ENCODE measurements at regions of chr2 and their contacts with region 1.

Region 1: DNA sequence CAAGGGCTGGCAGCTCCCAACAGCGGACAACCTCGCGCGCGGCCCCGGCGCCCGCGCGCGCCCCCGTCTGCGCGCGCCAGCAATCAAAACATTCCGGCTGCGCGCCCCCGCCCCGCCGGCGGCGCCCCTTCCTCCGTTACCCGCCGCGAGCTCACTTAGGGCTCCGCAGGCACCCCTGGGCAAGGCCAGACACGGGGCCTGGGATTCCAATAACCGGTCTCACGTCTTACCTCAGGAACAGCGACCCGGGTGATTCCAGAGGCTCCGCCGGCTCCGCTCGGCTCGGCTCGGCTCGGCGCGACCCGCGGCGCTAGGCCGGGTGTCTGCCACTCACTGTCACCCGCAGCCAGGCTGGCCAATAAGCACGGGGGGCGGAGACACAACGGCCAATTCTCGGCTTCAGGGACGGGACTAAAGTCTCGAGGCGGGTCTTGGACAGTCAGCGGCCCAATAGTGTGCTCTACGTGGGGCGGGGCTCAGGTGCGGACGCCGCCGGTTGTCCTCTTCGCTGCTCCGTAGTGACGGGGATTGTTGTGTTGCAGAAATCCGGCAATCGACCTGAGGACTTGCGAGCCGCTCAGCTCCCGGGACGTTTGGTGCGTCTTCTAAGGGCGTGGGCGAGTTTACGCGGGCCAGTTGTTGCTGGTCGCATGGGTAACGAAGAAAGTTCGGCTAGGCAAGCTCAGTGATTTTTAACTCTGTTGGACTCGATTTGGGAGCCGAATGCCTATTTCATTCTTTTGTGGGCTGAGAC is at the starts of genes ANKZF1 and ATG9A:
- DNase-seq: peak; percentile 99
- H3K4me3 ChIP-seq: peak within 1 kb of the TSS; percentile 87
- H3K27ac ChIP-seq: peak within 1 kb of the TSS; percentile 76
- H3K4me1 ChIP-seq: peaks cover 16% of the 10 kb centered on the region
- CTCF ChIP-seq: no peak
- total RNA-seq, gene ANKZF1: 57.8 and 91.0 TPM in 2 replicates
- total RNA-seq, gene ATG9A: 22.2 and 27.7 TPM in 2 replicates

Region 2: GRCh38 chr2:219206442-219207253 is 22.8 kb before region 1 on chr2 and contains the start of gene ZFAND2B:
- CTCF ChIA-PET with region 1: no interaction called
- POLR2A ChIA-PET with region 1: interaction called, 3 read pairs
- intact Hi-C with region 1: loop called (anchors 1 kb)
- DNase-seq: peak; percentile 97
- H3K4me3 ChIP-seq: peak within 1 kb of the TSS; percentile 69
- H3K27ac ChIP-seq: peak within 1 kb of the TSS; percentile 76
- H3K4me1 ChIP-seq: peaks cover 17% of the 10 kb centered on the region
- CTCF ChIP-seq: no peak
- total RNA-seq, gene ZFAND2B: 42.4 and 51.6 TPM in 2 replicates

Region 3: DNA sequence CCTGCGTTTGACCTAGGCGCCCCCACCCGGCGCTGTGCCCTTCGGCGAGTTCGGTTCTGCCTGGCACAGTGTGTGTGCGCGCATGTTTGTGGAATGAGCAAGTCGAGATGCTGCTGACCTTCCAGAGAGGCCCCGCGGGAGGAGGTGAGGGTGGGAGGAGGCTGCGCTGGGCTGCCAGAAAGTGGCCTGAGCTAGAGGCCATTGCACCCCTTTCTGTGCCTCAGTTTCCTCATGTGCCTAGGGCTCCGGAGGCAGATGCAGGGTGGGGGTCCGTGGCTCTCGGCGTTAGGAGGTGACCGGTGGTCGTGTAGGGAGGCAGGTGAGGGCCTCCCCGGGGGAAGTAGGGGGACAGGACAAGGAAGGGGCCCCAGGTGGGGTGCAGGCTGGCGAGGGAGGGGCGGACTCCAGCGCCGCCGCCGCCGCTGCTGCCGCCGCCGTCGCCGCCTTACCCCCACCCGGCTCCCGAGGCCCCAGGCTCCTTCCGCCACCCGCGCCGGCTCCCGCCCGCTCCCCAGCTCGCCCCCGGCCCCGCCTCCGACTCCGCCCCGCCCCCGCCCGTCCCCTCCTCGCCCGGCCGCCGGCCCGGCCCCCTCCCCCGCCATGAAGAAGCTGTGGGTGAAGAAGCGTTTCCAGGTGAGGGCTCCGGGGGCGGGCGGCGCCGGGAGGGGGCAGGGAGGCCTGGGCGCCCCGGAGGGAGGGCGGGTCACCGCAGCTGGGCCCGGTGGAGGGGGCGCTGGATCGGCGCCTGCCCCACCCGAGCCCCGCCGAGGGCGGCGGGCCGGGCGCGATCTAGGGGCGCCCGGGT is 212.2 kb after region 1 on chr2:
- CTCF ChIA-PET with region 1: no interaction called
- POLR2A ChIA-PET with region 1: no interaction called
- intact Hi-C with region 1: no loop called
- DNase-seq: peak; percentile 32
- H3K4me3 ChIP-seq: peak overlapping the region; percentile 53
- H3K27ac ChIP-seq: no peak overlapping the region
- H3K4me1 ChIP-seq: peaks cover 9% of the 10 kb centered on the region
- CTCF ChIP-seq: no peak

Region 4: GRCh38 chr2:219459460-219460311 is 230.2 kb after region 1 on chr2:
- CTCF ChIA-PET with region 1: no interaction called
- POLR2A ChIA-PET with region 1: no interaction called
- intact Hi-C with region 1: no loop called
- DNase-seq: peak; percentile 55
- H3K4me3 ChIP-seq: no peak overlapping the region
- H3K27ac ChIP-seq: no peak overlapping the region
- H3K4me1 ChIP-seq: peaks cover 9% of the 10 kb centered on the region
- CTCF ChIP-seq: peak; percentile 84

Region 5: DNA sequence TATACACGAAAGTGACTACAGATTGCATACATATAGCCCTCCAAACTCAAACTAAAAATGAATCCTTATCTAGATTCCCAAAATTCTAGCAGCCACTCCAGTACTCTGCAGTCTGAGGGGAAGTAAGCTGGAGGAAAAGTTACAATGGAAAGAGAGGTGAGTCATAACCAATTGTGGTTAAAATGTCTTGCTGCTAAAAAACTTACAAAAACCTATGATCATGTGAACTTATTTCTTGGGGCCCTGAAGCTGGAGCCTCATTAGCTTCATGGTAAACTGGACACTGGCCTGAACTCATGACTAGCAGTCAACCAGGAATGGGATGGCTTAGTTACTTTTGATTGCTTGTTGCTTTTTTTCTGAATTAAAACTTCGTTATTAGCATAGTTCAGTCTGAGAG is 573.8 kb after region 1 on chr2:
- CTCF ChIA-PET with region 1: no interaction called
- POLR2A ChIA-PET with region 1: no interaction called
- intact Hi-C with region 1: no loop called
- DNase-seq: no peak
- H3K4me3 ChIP-seq: no peak overlapping the region
- H3K27ac ChIP-seq: no peak overlapping the region
- H3K4me1 ChIP-seq: no peaks in the 10 kb centered on the region
- CTCF ChIP-seq: no peak

Measured in OCI-LY7 (cell line).